GM23248 (cell line): ENCODE measurements at regions of chr15 and their contacts with region 1.

Region 1: DNA sequence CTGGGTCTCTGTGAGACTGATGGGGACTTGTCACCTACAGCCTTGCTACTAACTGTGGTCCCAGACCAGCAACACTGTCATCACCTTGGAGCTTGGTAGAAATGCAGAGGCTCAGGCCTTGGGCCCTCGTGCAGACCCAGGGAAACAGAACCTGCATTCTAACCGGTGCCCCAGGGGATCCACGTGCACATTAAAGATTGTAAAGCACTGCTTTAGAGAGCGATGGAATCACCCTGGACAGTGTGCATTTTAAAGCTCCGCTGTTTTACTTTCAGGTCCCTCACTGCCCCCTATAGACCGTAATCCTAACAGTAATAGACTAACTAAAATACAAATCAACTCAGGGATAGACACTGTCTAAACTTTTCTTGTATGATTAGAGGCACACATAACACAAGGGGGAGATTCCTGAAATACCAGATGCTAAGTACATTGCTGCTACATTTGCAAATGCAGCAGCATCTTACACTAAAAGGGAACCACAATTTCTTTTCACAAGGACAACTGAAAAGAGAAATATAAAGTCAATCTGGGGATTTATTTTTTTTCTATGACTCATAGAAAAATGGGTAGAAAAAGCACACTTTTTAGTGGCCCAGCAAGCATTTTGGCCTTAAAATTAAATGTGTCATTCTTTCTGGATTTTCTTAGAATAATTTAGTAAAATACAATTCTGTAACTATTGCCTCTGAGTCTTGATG is 10.5 kb upstream of the SH3GL3 start:
- DNase-seq: peak; percentile 76
- H3K4me3 ChIP-seq: no peak overlapping the region
- H3K27ac ChIP-seq: no peak overlapping the region
- H3K4me1 ChIP-seq: 0 out of 2 replicates have a peak, but pooled peaks cover 4% of the 10 kb centered on the region
- H3K27me3 ChIP-seq: no peaks in the 10 kb centered on the region

Region 2: DNA sequence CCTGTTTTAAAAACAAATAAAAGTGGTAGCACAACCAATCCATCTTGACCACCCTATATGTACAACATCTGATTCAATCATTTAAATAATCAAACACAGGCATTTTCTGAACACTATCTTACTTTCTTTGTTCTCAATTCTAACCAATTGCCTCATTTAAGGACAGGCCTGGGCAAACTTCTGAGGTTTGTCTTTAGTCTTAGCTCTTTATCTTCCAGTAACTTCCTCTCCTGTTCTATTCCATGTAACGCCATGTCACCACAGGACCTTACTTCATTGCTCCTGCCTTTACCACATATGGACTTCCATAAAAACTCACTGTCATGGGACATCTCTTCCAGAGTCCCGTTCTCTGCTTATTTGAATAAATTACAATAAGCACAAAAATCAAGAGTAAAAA is 243.9 kb before region 1 on chr15:
- in situ Hi-C with region 1: no loop called
- DNase-seq: no peak
- H3K4me3 ChIP-seq: no peak overlapping the region
- H3K27ac ChIP-seq: no peak overlapping the region
- H3K4me1 ChIP-seq: no peaks in the 10 kb centered on the region
- H3K27me3 ChIP-seq: no peaks in the 10 kb centered on the region

Region 3: GRCh38 chr15:83243634-83244033 is 193.0 kb before region 1 on chr15:
- in situ Hi-C with region 1: loop called (anchors 5 kb)
- DNase-seq: no peak
- H3K4me3 ChIP-seq: no peak overlapping the region
- H3K27ac ChIP-seq: no peak overlapping the region
- H3K4me1 ChIP-seq: no peaks in the 10 kb centered on the region
- H3K27me3 ChIP-seq: peaks cover 29% of the 10 kb centered on the region

Region 4: DNA sequence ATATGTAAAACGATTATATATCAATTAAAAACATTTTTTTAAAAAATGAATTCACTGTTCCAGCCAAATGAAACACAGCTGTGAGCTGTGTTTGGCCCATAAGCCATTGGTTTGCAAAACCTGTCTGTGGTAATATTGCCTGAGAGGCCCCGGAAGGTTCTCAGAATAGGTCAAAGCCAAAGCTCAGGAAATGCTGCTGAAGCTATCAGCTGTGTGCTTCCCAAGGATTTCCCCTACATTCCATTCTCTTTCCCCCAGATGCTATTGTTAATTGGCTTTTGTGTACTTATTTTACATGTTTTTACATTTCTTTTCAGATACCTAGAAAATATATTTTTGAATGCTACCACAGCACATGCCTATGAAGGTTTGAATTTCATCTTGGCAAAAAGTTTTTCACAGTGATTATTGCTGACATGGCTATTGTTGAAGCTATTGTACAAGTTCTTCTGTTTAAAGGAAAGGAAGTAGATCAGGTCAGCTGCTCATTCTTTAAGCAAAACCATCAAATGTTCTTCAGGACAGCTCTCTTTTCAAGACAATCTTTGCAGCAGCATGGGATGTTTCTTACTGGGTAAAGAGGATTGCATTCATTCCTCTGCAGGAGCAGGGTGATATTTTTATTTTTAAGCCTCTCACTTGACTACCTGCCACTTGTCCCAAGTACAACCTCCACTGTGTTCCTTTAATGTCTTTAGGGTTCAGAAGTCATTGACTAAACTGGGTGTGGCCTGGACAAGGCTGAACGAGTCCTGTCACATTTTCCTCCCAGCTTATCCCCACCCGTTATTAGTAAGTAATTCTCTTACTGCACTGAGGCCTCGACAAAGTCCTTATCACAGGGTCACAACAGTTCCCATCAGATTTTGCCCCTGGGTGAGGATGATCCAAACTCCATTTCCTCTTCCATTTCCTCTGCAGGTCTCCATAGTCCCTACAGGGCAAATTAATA is 125.8 kb before region 1 on chr15:
- in situ Hi-C with region 1: no loop called
- DNase-seq: no peak
- H3K4me3 ChIP-seq: no peak overlapping the region
- H3K27ac ChIP-seq: no peak overlapping the region
- H3K4me1 ChIP-seq: peaks cover 10% of the 10 kb centered on the region
- H3K27me3 ChIP-seq: no peaks in the 10 kb centered on the region

Region 5: GRCh38 chr15:83559310-83559966 is 122.8 kb after region 1 on chr15:
- in situ Hi-C with region 1: loop called (anchors 10 kb)
- DNase-seq: peak; percentile 81
- H3K4me3 ChIP-seq: no peak overlapping the region
- H3K27ac ChIP-seq: no peak overlapping the region
- H3K4me1 ChIP-seq: no peaks in the 10 kb centered on the region
- H3K27me3 ChIP-seq: no peaks in the 10 kb centered on the region